ENCODE measurements at regions of chr2 and their contacts with region 1.

Region 1: GRCh38 chr2:84741296-84741765 is 139.6 kb downstream of the TRABD2A start:
- DNase-seq: peak; percentile 75
- ATAC-seq: peak; percentile 99
- H3K4me3 Mint-ChIP-seq: no peak overlapping the region
- H3K27ac Mint-ChIP-seq: peak overlapping the region; percentile 85
- H3K4me1 Mint-ChIP-seq: peaks cover 15% of the 10 kb centered on the region
- H3K27me3 Mint-ChIP-seq: no peaks in the 10 kb centered on the region

Region 2: GRCh38 chr2:84768840-84769239 is 27.5 kb after region 1 on chr2:
- CTCF ChIA-PET with region 1: interaction called, 12 read pairs
- POLR2A ChIA-PET with region 1: no interaction called
- DNase-seq: no peak
- ATAC-seq: no peak
- H3K4me3 Mint-ChIP-seq: no peak overlapping the region
- H3K27ac Mint-ChIP-seq: no peak overlapping the region
- H3K4me1 Mint-ChIP-seq: no peaks in the 10 kb centered on the region
- H3K27me3 Mint-ChIP-seq: no peaks in the 10 kb centered on the region

Region 3: GRCh38 chr2:84840306-84840705 is 99.0 kb after region 1 on chr2:
- CTCF ChIA-PET with region 1: interaction called, 16 read pairs
- POLR2A ChIA-PET with region 1: no interaction called
- DNase-seq: no peak
- ATAC-seq: peak; percentile 42
- H3K4me3 Mint-ChIP-seq: peak overlapping the region; percentile 54
- H3K27ac Mint-ChIP-seq: peak overlapping the region; percentile 71
- H3K4me1 Mint-ChIP-seq: peaks cover 60% of the 10 kb centered on the region
- H3K27me3 Mint-ChIP-seq: no peaks in the 10 kb centered on the region

Region 4: DNA sequence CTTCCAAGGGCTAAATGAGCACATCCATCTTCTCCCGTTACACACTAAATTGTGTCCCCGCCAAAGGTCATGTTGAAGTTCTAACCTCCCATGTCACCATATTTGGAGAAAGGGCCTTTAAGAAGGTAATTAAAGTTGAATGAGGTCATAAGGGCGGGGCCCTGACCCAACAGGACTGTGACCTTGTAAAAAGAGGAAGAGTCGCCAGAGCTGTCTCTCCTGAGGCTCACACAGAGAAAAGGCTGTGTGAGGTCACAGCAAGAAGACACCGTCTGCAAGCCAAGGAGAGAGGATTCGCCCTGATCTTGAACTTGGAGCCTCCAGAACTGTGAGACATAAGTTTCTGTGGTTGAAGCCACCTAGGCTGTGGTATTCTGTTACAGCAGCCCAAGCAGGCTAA is 115.5 kb after region 1 on chr2:
- CTCF ChIA-PET with region 1: interaction called, 26 read pairs
- POLR2A ChIA-PET with region 1: no interaction called
- DNase-seq: peak; percentile 75
- ATAC-seq: peak; percentile 80
- H3K4me3 Mint-ChIP-seq: peak overlapping the region; percentile 40
- H3K27ac Mint-ChIP-seq: peak overlapping the region; percentile 87
- H3K4me1 Mint-ChIP-seq: peaks cover 92% of the 10 kb centered on the region
- H3K27me3 Mint-ChIP-seq: no peaks in the 10 kb centered on the region